ENCODE measurements at regions of chr2 and their contacts with region 1.

Region 1: GRCh38 chr2:160269803-160270570 is 69.9 kb upstream of the ITGB6 start:
- DNase-seq: peak; percentile 91
- H3K4me3 ChIP-seq: peak overlapping the region; percentile 69
- H3K27ac ChIP-seq: peak overlapping the region; percentile 98
- H3K4me1 ChIP-seq: peaks cover 48% of the 10 kb centered on the region
- H3K27me3 ChIP-seq: no peaks in the 10 kb centered on the region
- CTCF ChIP-seq: peak; percentile 83

Region 2: GRCh38 chr2:159895258-159896065 is 374.5 kb before region 1 on chr2:
- intact Hi-C with region 1: no loop called
- DNase-seq: no peak
- H3K4me3 ChIP-seq: no peak overlapping the region
- H3K27ac ChIP-seq: no peak overlapping the region
- H3K4me1 ChIP-seq: no peaks in the 10 kb centered on the region
- H3K27me3 ChIP-seq: no peaks in the 10 kb centered on the region
- CTCF ChIP-seq: no peak

Region 3: GRCh38 chr2:160984426-160985077 is 714.6 kb after region 1 on chr2:
- intact Hi-C with region 1: loop called (anchors 10 kb)
- DNase-seq: peak; percentile 25
- H3K4me3 ChIP-seq: no peak overlapping the region
- H3K27ac ChIP-seq: peak overlapping the region; percentile 82
- H3K4me1 ChIP-seq: peaks cover 19% of the 10 kb centered on the region
- H3K27me3 ChIP-seq: no peaks in the 10 kb centered on the region
- CTCF ChIP-seq: no peak